ENCODE measurements at regions of chr16 and their contacts with region 1.

Region 1: DNA sequence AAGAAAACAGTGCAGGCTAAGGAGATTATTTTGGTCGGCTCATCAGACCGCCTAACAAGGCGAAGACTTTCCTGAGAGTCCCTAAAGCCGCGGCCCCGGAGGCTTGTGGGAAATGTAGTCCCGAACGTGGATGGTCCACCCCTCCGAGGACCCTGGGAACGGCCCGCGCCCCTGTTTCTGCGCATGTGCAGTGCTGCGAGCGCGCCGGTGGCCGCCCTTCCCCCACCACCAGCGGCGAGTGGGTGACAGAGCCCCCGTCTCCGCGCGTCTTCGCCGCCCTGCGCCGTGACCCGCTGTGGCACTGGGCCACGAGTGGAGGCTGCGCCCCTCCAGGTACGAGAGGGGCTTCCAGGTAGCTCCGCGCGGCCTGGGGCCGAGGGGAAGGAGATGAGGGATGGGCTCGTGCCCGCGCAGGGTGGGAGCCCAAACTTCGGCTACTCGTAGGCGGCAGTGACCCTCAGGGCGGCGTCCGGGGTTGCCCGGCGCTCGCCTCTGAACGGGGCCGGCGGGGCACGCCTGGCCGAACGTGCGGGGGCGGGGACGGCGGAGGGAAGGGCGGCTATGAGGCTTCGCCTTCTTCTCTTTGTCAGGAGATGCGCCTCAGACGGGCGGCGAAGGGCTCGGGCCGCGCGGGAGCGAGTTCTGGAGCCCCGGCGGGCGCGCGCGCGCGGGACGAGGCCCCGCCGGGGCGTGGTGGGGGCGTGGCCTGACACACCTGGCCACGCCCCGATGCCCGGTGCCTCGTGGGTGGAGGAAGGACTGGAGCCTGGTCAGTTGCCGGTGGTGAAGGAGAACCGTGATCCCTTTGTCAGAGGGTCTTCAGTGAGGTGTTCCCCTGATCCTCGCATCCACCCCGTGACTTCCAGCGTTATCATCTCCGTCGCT is at the start of gene ZFP1:
- DNase-seq: peak; percentile 97
- ATAC-seq: peak; percentile 93
- H3K4me3 Mint-ChIP-seq: peak within 1 kb of the TSS; percentile 88
- H3K27ac Mint-ChIP-seq: peak within 1 kb of the TSS; percentile 88
- H3K4me1 Mint-ChIP-seq: peaks cover 32% of the 10 kb centered on the region
- H3K27me3 Mint-ChIP-seq: no peaks in the 10 kb centered on the region
- total RNA-seq, gene ZFP1: 14.8 to 17.3 TPM

Region 2: GRCh38 chr16:74296432-74297144 is 852.0 kb before region 1 on chr16 and contains the start of gene PSMD7:
- CTCF ChIA-PET with region 1: no interaction called
- POLR2A ChIA-PET with region 1: no interaction called
- intact Hi-C with region 1: loop called in 1 of 2 experiments (anchors 10 kb)
- DNase-seq: peak; percentile 95
- ATAC-seq: peak; percentile 91
- H3K4me3 Mint-ChIP-seq: peak within 1 kb of the TSS; percentile 98
- H3K27ac Mint-ChIP-seq: peak within 1 kb of the TSS; percentile 99
- H3K4me1 Mint-ChIP-seq: peaks cover 34% of the 10 kb centered on the region
- H3K27me3 Mint-ChIP-seq: no peaks in the 10 kb centered on the region
- total RNA-seq, gene PSMD7: 122 to 134 TPM

Region 3: GRCh38 chr16:74695450-74696422 is 452.8 kb before region 1 on chr16:
- CTCF ChIA-PET with region 1: no interaction called
- POLR2A ChIA-PET with region 1: no interaction called
- intact Hi-C with region 1: loop called in 1 of 2 experiments (anchors 2 kb)
- DNase-seq: peak; percentile 78
- ATAC-seq: peak; percentile 79
- H3K4me3 Mint-ChIP-seq: peak overlapping the region; percentile 63
- H3K27ac Mint-ChIP-seq: peak overlapping the region; percentile 60
- H3K4me1 Mint-ChIP-seq: peaks cover 45% of the 10 kb centered on the region
- H3K27me3 Mint-ChIP-seq: no peaks in the 10 kb centered on the region

Region 4: DNA sequence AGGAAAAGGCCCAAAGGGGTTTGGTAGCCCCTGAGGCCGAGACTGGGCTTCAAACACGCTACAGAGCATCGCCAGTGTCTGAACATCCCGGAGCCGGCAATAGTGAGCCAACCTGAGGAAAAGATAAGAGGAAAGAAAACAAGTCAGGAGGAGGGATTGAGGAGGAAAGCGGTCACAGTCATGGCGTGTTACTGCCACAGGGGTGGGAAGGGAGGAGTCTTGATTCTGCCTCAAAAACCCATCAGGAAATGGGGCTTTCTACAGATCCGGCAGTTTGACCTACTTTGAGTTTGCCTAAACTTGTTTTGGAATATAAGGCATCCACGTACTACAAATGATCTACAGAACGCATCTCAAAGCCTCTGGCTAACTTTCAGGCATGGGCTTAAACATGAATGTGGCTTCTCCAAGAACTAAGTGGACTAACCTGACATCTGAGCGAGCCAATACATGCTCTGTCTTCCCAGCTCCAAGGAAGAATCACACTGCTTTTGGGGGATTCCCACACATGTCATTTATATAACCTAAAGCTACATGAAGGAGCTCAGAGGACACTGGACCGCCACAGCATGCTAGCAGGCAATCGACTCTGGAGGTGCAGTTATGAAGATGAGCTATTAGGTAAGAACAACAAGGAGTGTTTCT is 260.2 kb before region 1 on chr16:
- CTCF ChIA-PET with region 1: no interaction called
- POLR2A ChIA-PET with region 1: no interaction called
- intact Hi-C with region 1: no loop called
- DNase-seq: no peak
- ATAC-seq: no peak
- H3K4me3 Mint-ChIP-seq: no peak overlapping the region
- H3K27ac Mint-ChIP-seq: no peak overlapping the region
- H3K4me1 Mint-ChIP-seq: peaks cover 3% of the 10 kb centered on the region
- H3K27me3 Mint-ChIP-seq: no peaks in the 10 kb centered on the region

Region 5: DNA sequence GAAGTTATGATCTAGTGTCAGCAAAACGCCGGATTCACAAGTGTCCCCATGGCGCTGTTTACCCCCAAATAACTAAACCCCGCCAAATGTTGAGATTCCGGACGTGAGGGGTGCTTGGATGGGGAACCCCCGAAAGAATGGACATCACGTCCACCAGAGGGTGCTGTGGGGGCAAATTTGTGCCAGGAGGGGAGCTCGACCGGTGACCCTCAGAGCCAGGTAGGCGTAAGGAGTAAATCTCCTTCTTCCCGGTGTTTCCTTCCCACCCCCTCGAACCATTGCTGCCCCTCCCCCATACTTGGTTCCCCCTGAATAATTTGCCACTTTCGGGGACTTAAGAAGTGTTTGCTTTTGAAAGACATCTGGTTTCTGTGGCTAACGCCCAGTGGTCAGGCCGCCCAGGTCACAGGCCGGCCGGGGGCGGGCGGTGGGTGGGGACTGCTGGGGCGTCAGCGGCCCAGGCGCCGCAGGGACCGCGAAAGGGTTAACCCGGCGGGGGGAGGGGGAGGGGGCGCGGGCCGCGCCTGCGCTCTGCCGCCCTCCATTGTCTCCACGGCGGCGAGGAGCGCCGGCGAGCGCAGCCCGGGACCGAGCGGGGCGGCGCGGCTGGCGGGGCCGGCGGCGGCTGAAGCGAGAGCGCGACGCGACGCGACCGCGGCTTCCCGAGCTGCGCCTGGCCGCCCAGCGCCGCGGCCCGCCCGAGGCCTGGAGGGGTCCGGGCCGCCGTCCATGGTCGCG is 149.9 kb before region 1 on chr16 and contains the start of gene ZNRF1:
- CTCF ChIA-PET with region 1: no interaction called
- POLR2A ChIA-PET with region 1: no interaction called
- intact Hi-C with region 1: loop called in 1 of 2 experiments (anchors 1 kb)
- DNase-seq: peak; percentile 91
- ATAC-seq: peak; percentile 80
- H3K4me3 Mint-ChIP-seq: peak within 1 kb of the TSS; percentile 87
- H3K27ac Mint-ChIP-seq: peak within 1 kb of the TSS; percentile 75
- H3K4me1 Mint-ChIP-seq: peaks cover 39% of the 10 kb centered on the region
- H3K27me3 Mint-ChIP-seq: peaks cover 4% of the 10 kb centered on the region
- total RNA-seq, gene ZNRF1: 35.2 to 42.9 TPM

Region 6: GRCh38 chr16:75432828-75433731 is 284.5 kb after region 1 on chr16 and contains the start of gene CFDP1:
- CTCF ChIA-PET with region 1: no interaction called
- POLR2A ChIA-PET with region 1: no interaction called
- intact Hi-C with region 1: loop called in 1 of 2 experiments (anchors 1 kb)
- DNase-seq: peak; percentile 97
- ATAC-seq: peak; percentile 94
- H3K4me3 Mint-ChIP-seq: peak within 1 kb of the TSS; percentile 92
- H3K27ac Mint-ChIP-seq: peak within 1 kb of the TSS; percentile 95
- H3K4me1 Mint-ChIP-seq: peaks cover 39% of the 10 kb centered on the region
- H3K27me3 Mint-ChIP-seq: no peaks in the 10 kb centered on the region
- total RNA-seq, gene CFDP1: 44.0 to 48.2 TPM

Region 7: DNA sequence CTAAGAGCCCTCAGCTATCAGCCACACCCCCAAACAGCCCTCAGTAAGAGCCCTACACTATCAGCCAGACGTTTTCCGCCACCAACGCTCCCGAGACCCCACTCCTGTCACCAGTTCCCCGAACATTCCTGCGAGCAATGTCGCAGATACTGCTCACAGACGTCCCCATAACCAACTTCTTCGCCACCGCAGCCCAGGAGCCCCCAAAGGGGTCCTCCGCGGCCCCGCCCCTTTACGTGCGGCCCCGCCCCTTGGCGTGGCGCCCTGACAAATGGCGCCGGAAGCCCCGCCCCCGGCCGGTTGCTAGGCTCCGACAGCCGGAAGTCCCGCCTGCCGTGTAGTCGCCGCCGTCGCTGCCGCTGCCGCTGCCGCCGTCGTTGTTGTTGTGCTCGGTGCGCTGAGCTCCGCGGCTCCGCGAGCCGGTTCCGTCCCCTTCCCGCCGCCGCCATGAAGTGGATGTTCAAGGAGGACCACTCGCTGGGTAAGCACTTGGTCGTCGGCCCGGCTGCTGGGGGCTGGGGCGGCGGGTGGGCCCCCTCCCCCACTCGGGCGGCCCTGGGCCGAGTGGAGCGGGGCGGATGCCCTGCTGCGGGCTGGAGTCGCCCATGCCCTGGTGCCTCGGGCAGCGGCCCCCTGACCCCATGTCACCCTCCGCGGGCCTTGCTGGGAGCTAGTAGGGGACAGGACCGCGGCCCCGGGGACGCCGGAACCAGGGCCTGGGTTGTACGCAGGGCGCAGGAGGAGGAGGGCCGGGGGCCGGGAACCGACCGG is 417.7 kb after region 1 on chr16 and contains the start of gene GABARAPL2:
- CTCF ChIA-PET with region 1: no interaction called
- POLR2A ChIA-PET with region 1: no interaction called
- intact Hi-C with region 1: loop called in 1 of 2 experiments (anchors 2 kb)
- DNase-seq: peak; percentile 94
- ATAC-seq: peak; percentile 72
- H3K4me3 Mint-ChIP-seq: peak within 1 kb of the TSS; percentile 82
- H3K27ac Mint-ChIP-seq: peak within 1 kb of the TSS; percentile 86
- H3K4me1 Mint-ChIP-seq: peaks cover 44% of the 10 kb centered on the region
- H3K27me3 Mint-ChIP-seq: peaks cover 10% of the 10 kb centered on the region
- total RNA-seq, gene GABARAPL2: 31.9 to 58.0 TPM

Measured in activated CD4-positive, alpha-beta T cell treated with anti-CD3 and anti-CD28 coated beads for 36 hours (primary cell).